Aorta (tissue), 5 donors: ENCODE measurements at regions of chr15 and their contacts with region 1.

Region 1: DNA sequence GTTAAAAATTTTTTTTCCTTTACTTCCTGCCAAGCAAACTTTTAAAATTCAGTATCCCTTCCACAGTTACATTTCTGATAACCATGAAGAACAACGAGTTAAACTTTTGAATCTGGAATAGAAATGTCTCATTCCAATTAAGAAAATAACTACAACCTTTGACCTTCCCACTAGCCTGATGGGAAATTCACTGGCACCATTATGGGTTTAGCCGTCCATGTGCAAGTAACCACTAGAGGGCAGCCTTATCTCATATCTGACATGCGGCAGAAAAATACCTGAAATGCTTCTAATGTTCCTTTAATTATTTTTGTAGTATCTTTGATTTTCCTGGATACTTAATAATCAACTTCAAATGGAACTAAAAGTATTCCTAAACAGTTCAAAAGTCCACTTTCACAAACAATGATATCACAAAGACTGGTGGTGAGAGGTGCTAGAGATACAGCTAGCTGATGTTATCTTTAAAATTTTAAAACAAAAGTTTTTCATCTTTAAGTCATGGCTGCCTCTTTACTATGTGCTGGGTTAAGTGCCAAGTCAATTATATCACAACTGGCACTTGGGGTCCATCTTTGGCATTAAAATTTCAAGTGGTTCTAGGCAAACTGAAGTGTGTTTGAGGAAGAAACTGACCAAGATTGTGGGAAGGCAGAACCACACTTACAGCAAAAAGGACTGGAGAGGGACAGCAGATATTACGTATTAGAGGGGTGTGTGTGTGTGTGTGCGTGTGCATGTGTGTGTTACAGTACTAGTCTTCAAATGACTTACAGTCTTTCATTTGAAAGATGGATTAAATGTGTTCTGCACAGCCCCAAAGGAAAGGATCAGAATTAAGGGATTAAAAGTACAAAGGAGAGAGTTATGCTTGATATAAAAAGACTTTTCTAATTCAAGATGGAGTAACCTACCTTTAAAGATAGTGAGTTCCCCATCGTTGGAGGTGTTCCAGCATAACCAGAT is 107.1 kb upstream of the ICE2 start:
- DNase-seq: no peak
- ATAC-seq: peak; percentile 81
- H3K4me3 ChIP-seq: no peak overlapping the region
- H3K27ac ChIP-seq: no peak overlapping the region
- H3K4me1 ChIP-seq: peaks cover 0 to 3% of the 10 kb centered on the region in 2 donors
- H3K27me3 ChIP-seq: no peaks in the 10 kb centered on the region

Region 2: GRCh38 chr15:60496853-60497252 is 89.2 kb before region 1 on chr15:
- intact Hi-C with region 1: no loop called
- DNase-seq: no peak
- ATAC-seq: no peak
- H3K4me3 ChIP-seq: no peak overlapping the region
- H3K27ac ChIP-seq: no peak overlapping the region
- H3K4me1 ChIP-seq: no peaks in the 10 kb centered on the region
- H3K27me3 ChIP-seq: no peaks in the 10 kb centered on the region

Region 3: GRCh38 chr15:60916679-60917460 is 330.8 kb after region 1 on chr15:
- intact Hi-C with region 1: loop called (anchors 2 kb)
- DNase-seq: peak; percentile 93
- ATAC-seq: peak; percentile 92
- H3K4me3 ChIP-seq: peak overlapping the region in 1 of 2 donors; percentile 28
- H3K27ac ChIP-seq: peak overlapping the region; percentile 70 to 79
- H3K4me1 ChIP-seq: no peaks in the 10 kb centered on the region
- H3K27me3 ChIP-seq: no peaks in the 10 kb centered on the region